CD4-positive, alpha-beta memory T cell (primary cell): ENCODE measurements at regions of chr6 and their contacts with region 1.

Region 1: GRCh38 chr6:139334806-139335446 is 39.5 kb downstream of the CITED2 start:
- DNase-seq: no peak
- H3K4me3 ChIP-seq: no peak overlapping the region
- H3K4me3 Mint-ChIP-seq: no peak overlapping the region
- H3K27ac ChIP-seq: no peak overlapping the region
- H3K27ac Mint-ChIP-seq: peak overlapping the region in 1 of 7 donors; percentile 7
- H3K4me1 ChIP-seq: no peaks in the 10 kb centered on the region
- H3K4me1 Mint-ChIP-seq: peaks cover 2 to 6% (median 3%) of the 10 kb centered on the region in 4 donors
- H3K27me3 ChIP-seq: no peaks in the 10 kb centered on the region
- H3K27me3 Mint-ChIP-seq: no peaks in the 10 kb centered on the region

Region 2: GRCh38 chr6:139262519-139263300 is 72.2 kb before region 1 on chr6:
- CTCF ChIA-PET with region 1: interaction called, 3 read pairs
- POLR2A ChIA-PET with region 1: no interaction called
- intact Hi-C with region 1: loop called (anchors 5 kb)
- DNase-seq: peak; percentile 53 to 62 (median 59)
- H3K4me3 ChIP-seq: peak overlapping the region in 1 of 2 donors; percentile 22
- H3K4me3 Mint-ChIP-seq: peak overlapping the region; percentile 74 to 86 (median 82)
- H3K27ac ChIP-seq: peak overlapping the region; percentile 44
- H3K27ac Mint-ChIP-seq: peak overlapping the region; percentile 59 to 96 (median 90)
- H3K4me1 ChIP-seq: peaks cover 39% of the 10 kb centered on the region
- H3K4me1 Mint-ChIP-seq: peaks cover 34 to 56% (median 39%) of the 10 kb centered on the region in 4 donors
- H3K27me3 ChIP-seq: no peaks in the 10 kb centered on the region
- H3K27me3 Mint-ChIP-seq: no peaks in the 10 kb centered on the region